Activated T-helper 2 cell treated with anti-CD3 and anti-CD28 coated beads, Interferon-gamma antibody, Interleukin-2, Interleukin-4, amounts not matched to agents 10 μg/mL and 5 μg/mL and 100 μg/mL, durations not matched to agents 14 hours and 24 hours and 36 hours (primary cell): ENCODE measurements at regions of chr14 and their contacts with region 1.

Region 1: DNA sequence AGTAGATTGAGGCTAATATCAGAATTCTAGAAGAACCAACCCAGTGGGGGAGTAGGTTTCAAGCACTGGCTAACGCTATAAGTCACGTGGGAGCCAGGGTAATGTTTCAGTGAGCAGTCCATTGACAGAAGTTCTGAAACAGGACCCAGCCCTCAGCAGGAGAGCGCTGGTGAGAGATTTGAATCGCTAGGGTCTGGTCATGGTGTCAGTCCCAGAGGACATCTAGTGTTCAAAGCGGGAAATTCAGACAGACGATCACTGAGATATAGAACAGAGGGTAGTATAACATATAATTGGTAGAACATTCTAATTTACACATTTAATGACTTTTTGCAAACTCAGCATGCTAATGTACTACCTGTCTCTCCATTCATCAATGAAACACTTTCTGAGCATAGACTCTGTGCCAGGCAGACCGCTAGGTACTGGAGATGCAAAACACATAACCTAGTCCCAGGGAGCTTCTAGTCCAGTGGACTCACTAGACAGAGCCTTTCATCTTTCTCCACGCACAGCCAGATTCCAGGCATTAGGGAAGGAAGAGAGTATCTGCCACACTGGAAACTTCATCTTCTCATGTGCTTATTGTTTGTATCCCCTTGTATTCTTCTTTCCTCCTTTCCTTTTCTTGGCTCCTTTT is 35.4 kb upstream of the RNASE3 start:
- DNase-seq: peak; percentile 31
- H3K4me3 Mint-ChIP-seq: no peak overlapping the region
- H3K27ac Mint-ChIP-seq: no peak overlapping the region
- H3K4me1 Mint-ChIP-seq: peaks cover 4% of the 10 kb centered on the region
- H3K27me3 Mint-ChIP-seq: peaks cover 25% of the 10 kb centered on the region

Region 2: DNA sequence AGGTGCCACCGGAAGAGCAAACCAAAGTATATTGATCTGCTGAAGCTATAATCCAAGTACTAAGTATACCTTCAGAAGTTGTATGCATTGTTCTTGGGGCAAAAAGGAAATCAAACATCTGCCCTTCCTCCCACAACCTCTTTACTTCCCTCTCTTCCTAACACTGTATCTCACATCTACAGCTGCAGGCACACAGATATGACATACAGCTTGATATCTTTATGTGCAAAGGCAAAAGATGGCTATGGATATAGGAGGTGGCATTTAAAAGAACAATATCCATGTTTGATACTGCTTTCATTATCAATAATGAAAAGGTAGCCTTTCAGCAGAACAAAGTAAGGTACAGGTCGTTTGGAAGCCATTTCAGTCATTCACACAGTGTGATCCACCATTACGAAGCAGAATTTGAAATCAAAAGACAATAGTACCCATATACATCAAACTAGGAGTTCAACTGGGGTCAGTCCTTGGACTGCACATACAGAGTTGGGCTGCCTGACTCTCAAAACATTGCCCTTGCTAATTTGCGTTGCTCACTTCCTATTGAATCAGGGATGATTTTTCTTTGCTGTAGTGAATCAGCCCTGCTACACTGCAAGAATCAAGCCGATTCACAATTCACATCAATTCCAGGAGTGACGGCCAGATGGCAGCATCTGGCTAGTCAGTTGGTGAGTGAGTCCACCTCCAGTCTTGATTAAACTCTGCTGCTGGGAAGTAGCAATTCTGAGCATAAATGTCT is 158.3 kb before region 1 on chr14:
- intact Hi-C with region 1: loop called (anchors 1 kb)
- DNase-seq: peak; percentile 44
- H3K4me3 Mint-ChIP-seq: no peak overlapping the region
- H3K27ac Mint-ChIP-seq: no peak overlapping the region
- H3K4me1 Mint-ChIP-seq: peaks cover 15% of the 10 kb centered on the region
- H3K27me3 Mint-ChIP-seq: peaks cover 2% of the 10 kb centered on the region

Region 3: GRCh38 chr14:20873370-20874177 is 17.8 kb after region 1 on chr14:
- intact Hi-C with region 1: loop called (anchors 1 kb)
- DNase-seq: peak; percentile 65
- H3K4me3 Mint-ChIP-seq: no peak overlapping the region
- H3K27ac Mint-ChIP-seq: no peak overlapping the region
- H3K4me1 Mint-ChIP-seq: peaks cover 10% of the 10 kb centered on the region
- H3K27me3 Mint-ChIP-seq: peaks cover 21% of the 10 kb centered on the region

Region 4: GRCh38 chr14:20934148-20934762 is 78.5 kb after region 1 on chr14:
- intact Hi-C with region 1: no loop called
- DNase-seq: peak; percentile 14
- H3K4me3 Mint-ChIP-seq: no peak overlapping the region
- H3K27ac Mint-ChIP-seq: no peak overlapping the region
- H3K4me1 Mint-ChIP-seq: no peaks in the 10 kb centered on the region
- H3K27me3 Mint-ChIP-seq: no peaks in the 10 kb centered on the region